ENCODE measurements at regions of chr15 and their contacts with region 1.

Region 1: GRCh38 chr15:100349696-100350433 is 8.1 kb upstream of the ADAMTS17 start:
- DNase-seq: peak; percentile 77
- CTCF ChIP-seq: peak; percentile 81

Region 2: DNA sequence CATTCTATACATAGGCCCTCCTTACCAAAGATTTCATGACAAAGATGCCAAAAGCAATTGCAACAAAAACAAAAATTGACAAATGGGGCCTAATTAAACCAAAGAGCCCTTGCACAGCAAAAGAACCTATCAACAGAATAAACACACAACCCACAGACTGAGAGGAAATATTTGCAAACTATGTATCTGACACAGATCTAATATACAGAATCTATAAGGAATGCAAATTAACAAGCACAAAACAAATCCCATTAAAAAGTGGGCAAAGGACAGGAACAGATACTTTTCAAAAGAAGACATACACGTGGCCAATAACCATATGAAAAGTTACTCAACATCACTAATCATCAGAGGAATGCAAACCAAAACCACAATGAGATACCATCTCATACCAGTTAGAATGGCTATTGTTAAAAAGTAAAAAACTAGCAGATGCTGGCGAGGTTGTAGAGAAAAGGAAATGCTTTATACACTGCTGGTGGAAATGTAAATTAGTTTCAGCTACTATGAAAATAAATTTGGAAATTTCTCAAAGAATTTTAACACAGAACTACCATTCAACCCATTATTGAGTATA is 58.9 kb before region 1 on chr15:
- CTCF ChIA-PET with region 1: no interaction called
- POLR2A ChIA-PET with region 1: no interaction called
- DNase-seq: no peak
- CTCF ChIP-seq: no peak

Region 3: DNA sequence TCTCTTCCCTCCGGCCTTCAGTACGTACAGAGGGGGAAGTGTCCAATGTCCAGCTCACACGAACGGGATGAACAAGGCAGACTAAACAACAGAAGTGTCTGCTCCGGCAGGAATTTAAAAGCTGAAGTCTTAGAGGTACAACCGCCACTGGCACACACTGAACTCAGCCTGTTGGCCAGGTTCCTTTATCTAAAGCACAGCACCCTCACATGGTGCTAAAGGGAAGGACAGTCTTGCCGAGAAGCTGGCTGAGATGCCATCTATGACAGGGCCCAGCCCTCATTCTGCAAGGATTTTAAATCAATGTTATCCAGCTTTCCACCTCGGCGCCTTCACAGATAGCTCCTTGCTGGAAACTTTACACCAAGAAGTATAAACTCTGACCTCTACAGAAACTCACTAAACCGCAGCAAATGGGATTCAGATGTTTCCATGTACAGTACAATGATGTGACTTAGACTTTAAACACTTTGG is 10.9 kb before region 1 on chr15:
- CTCF ChIA-PET with region 1: interaction called, 77 read pairs
- POLR2A ChIA-PET with region 1: no interaction called
- DNase-seq: no peak
- CTCF ChIP-seq: peak; percentile 27

Region 4: GRCh38 chr15:100383302-100384107 is 33.6 kb after region 1 on chr15:
- CTCF ChIA-PET with region 1: interaction called, 16 read pairs
- POLR2A ChIA-PET with region 1: no interaction called
- DNase-seq: no peak
- CTCF ChIP-seq: peak; percentile 31

Region 5: DNA sequence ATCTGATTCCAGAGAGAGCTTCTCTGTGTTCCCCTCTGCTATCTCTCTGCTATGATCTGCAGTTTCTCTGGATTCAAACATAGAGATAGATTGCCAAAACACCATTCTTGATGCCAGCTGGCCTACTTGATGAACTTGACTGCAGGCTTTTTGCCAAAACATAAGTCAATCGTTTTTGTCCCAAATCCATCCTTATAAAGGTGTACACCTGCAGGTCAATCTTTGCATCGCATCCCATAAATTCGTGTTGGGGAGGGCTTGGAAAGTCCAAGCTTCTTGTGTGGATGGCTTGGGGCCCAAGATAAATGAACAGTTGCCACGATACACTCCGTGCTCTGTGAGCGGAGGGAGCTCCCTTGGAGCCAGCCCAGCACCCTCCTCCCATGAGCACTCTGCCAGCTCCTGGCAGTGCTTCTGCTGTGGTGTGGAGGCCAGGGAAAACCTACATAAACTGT is 176.2 kb after region 1 on chr15:
- CTCF ChIA-PET with region 1: no interaction called
- POLR2A ChIA-PET with region 1: no interaction called
- DNase-seq: no peak
- CTCF ChIP-seq: no peak

Region 6: GRCh38 chr15:100572362-100572983 is 222.6 kb after region 1 on chr15:
- CTCF ChIA-PET with region 1: interaction called, 19 read pairs
- POLR2A ChIA-PET with region 1: no interaction called
- DNase-seq: no peak
- CTCF ChIP-seq: peak; percentile 16